Lower leg skin (tissue), 4 donors: ENCODE measurements at regions of chr12 and their contacts with region 1.

Region 1: GRCh38 chr12:56468216-56469006 is at the start of gene SPRYD4:
- DNase-seq: peak; percentile 92 to 98
- H3K4me3 ChIP-seq: peak within 1 kb of the TSS; percentile 57
- CTCF ChIP-seq: no peak
- POLR2A ChIP-seq: peak in 1 of 2 donors; percentile 35
- total RNA-seq, gene SPRYD4: 1.3 to 2.3 (median 2.1) TPM

Region 2: DNA sequence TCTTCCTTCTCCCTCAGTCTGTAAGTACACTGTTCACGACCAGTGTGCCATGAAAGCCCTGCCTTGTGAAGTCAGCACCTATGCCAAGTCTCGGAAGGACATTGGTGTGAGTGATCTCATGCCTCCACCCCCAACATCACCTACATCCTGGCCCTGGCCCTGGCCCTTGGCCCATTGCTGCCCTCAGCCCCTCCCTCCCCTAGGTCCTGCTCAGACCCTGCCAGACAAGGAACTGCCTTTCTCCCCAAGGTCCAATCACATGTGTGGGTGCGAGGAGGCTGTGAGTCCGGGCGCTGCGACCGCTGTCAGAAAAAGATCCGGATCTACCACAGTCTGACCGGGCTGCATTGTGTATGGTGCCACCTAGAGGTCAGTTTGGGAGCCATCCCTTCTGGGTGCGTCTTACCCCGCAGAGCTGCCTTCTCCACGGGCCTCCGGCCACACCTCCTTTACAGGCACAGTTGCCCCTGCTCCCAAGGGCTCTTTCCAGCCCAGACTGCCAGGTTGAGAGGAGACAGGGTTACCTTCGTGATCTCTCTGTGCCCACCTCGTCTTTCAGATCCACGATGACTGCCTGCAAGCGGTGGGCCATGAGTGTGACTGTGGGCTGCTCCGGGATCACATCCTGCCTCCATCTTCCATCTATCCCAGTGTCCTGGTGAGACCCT is 528.2 kb before region 1 on chr12:
- intact Hi-C with region 1: no loop called
- DNase-seq: peak; percentile 85 to 97
- H3K4me3 ChIP-seq: no peak overlapping the region
- CTCF ChIP-seq: peak in 1 of 3 donors; percentile 84
- POLR2A ChIP-seq: no peak

Region 3: DNA sequence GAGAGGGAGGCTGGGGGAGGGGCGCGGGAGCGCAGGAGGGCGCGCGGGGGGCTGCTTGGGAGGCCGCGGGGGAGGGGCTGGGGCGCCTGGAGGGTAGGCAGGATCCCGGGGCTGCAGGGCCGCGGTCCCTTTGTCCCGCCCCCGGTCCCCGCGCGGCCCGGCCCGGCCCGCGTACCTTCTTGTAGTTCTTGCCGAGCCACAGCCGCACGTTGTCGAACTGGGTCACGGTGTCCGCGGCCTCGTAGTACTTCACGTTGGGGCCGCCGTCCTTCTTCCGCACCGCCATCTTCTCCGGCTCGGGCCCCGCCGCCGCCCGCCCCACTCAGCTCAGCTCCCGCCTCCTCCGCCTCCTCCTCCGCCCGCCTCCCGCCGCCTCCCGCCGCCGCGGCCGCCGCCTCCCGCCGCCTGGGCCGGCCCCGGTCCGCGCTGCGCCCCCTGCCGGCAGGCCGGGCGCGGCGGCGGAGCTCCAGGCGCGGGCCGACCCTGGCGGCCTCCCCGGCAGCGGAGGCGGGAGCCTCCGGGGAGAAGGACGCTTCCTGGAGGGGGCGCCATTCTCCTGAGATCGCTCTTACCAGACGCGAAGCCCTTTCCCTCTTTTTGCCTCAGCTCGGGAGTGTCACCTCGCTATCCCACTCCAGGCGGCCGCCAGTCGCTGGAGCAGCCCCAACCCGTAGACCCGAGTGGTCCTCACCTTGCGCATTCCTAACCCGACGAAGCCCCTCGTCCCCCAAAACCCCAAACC is 279.1 kb before region 1 on chr12 and contains the start of gene SMARCC2:
- intact Hi-C with region 1: loop called (anchors 5 kb)
- DNase-seq: peak; percentile 85 to 97
- H3K4me3 ChIP-seq: peak within 1 kb of the TSS; percentile 85
- CTCF ChIP-seq: peak in 1 of 3 donors; percentile 57
- POLR2A ChIP-seq: no peak
- total RNA-seq, gene SMARCC2: 55.3 to 90.5 (median 63.5) TPM

Region 4: GRCh38 chr12:56431850-56432249 is 36.6 kb before region 1 on chr12:
- intact Hi-C with region 1: no loop called
- DNase-seq: no peak
- H3K4me3 ChIP-seq: no peak overlapping the region
- CTCF ChIP-seq: no peak
- POLR2A ChIP-seq: no peak